CD14-positive monocyte (primary cell): ENCODE measurements at regions of chr5 and their contacts with region 1.

Region 1: GRCh38 chr5:172059661-172060100 is 53.2 kb upstream of the FBXW11 start:
- DNase-seq: no peak
- H3K4me3 ChIP-seq: no peak overlapping the region
- H3K4me3 Mint-ChIP-seq: no peak overlapping the region
- H3K27ac ChIP-seq: no peak overlapping the region
- H3K27ac Mint-ChIP-seq: peak overlapping the region in 2 of 7 donors; percentile 61 to 79
- H3K4me1 ChIP-seq: no peaks in the 10 kb centered on the region
- H3K4me1 Mint-ChIP-seq: no peaks in the 10 kb centered on the region
- H3K27me3 ChIP-seq: no peaks in the 10 kb centered on the region
- H3K27me3 Mint-ChIP-seq: peaks cover 0 to 8% (median 0%) of the 10 kb centered on the region in 3 donors
- CTCF ChIP-seq: peak; percentile 71

Region 2: GRCh38 chr5:172097356-172097755 is 37.7 kb after region 1 on chr5:
- intact Hi-C with region 1: loop called in 1 of 2 experiments (anchors 5 kb)
- DNase-seq: no peak
- H3K4me3 ChIP-seq: no peak overlapping the region
- H3K4me3 Mint-ChIP-seq: no peak overlapping the region
- H3K27ac ChIP-seq: no peak overlapping the region
- H3K27ac Mint-ChIP-seq: peak overlapping the region in 2 of 7 donors; percentile 52 to 73
- H3K4me1 ChIP-seq: no peaks in the 10 kb centered on the region
- H3K4me1 Mint-ChIP-seq: no peaks in the 10 kb centered on the region
- H3K27me3 ChIP-seq: no peaks in the 10 kb centered on the region
- H3K27me3 Mint-ChIP-seq: no peaks in the 10 kb centered on the region
- CTCF ChIP-seq: no peak

Region 3: DNA sequence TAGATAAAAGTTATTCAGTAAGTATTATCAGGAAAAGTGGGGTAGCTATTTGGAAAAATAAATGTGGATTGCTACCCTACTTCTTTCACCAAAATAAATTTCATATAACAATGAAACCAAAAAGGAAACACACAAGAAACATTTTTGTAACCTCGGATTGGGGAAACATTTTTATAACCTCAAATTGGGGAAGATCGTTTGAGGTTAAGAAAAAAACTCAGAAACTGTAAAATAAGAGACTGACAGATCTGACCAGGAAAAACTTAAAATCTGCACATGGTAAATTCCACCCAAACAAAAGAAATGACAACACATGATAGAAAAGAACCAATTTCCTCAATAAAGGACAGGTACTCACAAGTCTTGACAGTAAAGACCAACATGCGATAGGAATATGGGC is 147.8 kb after region 1 on chr5:
- intact Hi-C with region 1: no loop called
- DNase-seq: no peak
- H3K4me3 ChIP-seq: no peak overlapping the region
- H3K4me3 Mint-ChIP-seq: no peak overlapping the region
- H3K27ac ChIP-seq: no peak overlapping the region
- H3K27ac Mint-ChIP-seq: no peak overlapping the region
- H3K4me1 ChIP-seq: peaks cover 14 to 19% of the 10 kb centered on the region in 2 donors
- H3K4me1 Mint-ChIP-seq: peaks cover 25% of the 10 kb centered on the region
- H3K27me3 ChIP-seq: no peaks in the 10 kb centered on the region
- H3K27me3 Mint-ChIP-seq: peaks cover 0 to 2% (median 1%) of the 10 kb centered on the region in 3 donors
- CTCF ChIP-seq: no peak